IMR-90 (cell line): ENCODE measurements at regions of chr10 and their contacts with region 1.

Region 1: DNA sequence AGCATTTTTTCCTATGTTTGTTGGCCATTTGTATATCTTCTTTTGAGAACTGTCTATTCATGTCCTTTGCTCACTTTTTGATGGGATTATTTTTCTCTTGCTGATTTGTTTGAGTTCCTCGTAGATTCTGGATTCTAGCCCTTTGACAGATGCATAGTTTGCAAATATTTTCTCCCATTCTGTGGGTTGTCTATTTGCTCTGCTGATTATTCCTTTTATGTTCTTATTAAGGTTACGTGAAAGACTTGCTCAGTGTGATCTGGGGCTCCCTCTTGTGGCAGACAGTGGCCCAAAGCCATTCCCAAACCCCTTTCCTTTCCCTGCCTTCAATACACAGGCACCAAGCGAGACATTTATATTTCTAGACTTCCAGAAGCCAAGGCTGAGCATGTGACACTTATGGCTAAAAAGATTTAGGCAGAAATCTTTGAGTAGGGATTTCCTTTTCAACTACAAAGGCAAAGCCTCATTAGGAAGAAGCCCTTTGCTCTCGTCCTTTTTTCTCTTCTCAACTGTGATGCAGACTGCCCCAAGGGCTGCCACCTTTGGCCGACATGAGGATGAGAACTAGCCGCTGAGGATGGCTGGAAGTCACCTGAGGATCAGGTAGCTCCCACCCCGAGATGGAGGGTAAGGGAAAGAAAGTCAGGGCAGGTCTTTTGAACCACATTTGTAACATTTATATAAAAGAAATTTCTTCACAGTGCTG is 23.6 kb downstream of the ST8SIA6 start:
- DNase-seq: peak; percentile 73
- ATAC-seq: peak; percentile 97
- H3K4me3 ChIP-seq: no peak overlapping the region
- H3K27ac ChIP-seq: no peak overlapping the region
- H3K4me1 ChIP-seq: peaks cover 2% of the 10 kb centered on the region; the same call in 1 of the 2 replicates
- H3K27me3 ChIP-seq: peaks cover 26% of the 10 kb centered on the region
- CTCF ChIP-seq: peak; percentile 83
- POLR2A ChIP-seq: no peak
- RAD21 ChIP-seq: peak; percentile 80

Region 2: DNA sequence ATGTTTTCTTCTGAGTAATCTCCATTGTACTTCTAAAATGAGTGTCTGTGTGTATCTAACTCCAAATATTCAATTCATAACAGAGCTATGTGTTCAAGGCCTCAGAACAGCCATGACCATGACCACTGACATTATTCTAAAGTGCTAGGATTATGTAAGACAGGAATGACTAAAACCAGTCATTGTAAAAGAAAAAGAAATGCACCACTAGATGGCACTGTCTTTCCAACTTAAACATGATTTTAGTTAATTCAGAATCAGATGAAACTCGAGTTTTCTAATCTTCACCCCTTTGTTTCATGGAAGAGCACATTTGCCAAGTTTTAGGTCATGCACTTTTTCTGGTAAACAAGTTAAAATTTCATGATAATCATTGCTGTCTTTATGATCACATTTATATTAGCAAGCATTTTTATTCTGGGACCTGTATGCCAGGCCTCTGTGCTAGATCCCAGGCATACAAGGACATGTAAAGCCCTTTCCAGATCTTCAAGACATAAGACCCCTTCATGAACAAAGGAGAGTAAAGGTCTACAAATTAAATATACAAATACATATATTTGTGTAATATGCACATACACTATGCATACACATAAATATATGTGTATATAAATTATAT is 587.4 kb before region 1 on chr10:
- CTCF ChIA-PET with region 1: interaction called, 3 read pairs
- POLR2A ChIA-PET with region 1: no interaction called
- dilution Hi-C with region 1: no loop called
- in situ Hi-C with region 1: no loop called
- intact Hi-C with region 1: loop called (anchors 5 kb)
- DNase-seq: peak; percentile 82
- ATAC-seq: peak; percentile 85
- H3K4me3 ChIP-seq: no peak overlapping the region
- H3K27ac ChIP-seq: no peak overlapping the region
- H3K4me1 ChIP-seq: peaks cover 6% of the 10 kb centered on the region; the same call in 1 of the 2 replicates
- H3K27me3 ChIP-seq: no peaks in the 10 kb centered on the region
- CTCF ChIP-seq: peak; percentile 71
- POLR2A ChIP-seq: no peak
- RAD21 ChIP-seq: peak; percentile 77

Region 3: DNA sequence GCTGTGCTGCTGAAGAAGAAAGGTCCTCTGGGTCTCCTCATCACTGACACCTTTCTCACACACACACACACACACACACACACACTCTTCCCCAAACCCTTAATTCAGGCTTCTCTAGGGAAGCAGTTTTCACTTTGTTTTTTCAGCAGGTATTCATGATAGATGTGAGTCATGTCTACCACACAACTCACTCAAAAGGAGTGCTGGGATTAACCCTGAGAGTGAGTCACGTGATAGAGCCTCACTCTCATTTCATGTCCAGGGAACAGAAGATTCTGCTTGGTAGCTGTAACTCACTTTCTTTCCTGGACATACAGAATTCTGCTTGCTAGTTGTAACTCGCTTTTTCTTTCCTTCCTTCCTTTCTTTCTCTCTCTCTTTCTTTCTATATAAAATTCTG is 157.4 kb before region 1 on chr10:
- CTCF ChIA-PET with region 1: no interaction called
- POLR2A ChIA-PET with region 1: no interaction called
- dilution Hi-C with region 1: no loop called
- in situ Hi-C with region 1: no loop called
- intact Hi-C with region 1: loop called (anchors 10 kb)
- DNase-seq: peak; percentile 80
- ATAC-seq: peak; percentile 40; the same call in 1 of the 2 replicates
- H3K4me3 ChIP-seq: no peak overlapping the region
- H3K27ac ChIP-seq: no peak overlapping the region
- H3K4me1 ChIP-seq: no peaks in the 10 kb centered on the region
- H3K27me3 ChIP-seq: peaks cover 13% of the 10 kb centered on the region
- CTCF ChIP-seq: no peak
- POLR2A ChIP-seq: no peak
- RAD21 ChIP-seq: no peak

Region 4: DNA sequence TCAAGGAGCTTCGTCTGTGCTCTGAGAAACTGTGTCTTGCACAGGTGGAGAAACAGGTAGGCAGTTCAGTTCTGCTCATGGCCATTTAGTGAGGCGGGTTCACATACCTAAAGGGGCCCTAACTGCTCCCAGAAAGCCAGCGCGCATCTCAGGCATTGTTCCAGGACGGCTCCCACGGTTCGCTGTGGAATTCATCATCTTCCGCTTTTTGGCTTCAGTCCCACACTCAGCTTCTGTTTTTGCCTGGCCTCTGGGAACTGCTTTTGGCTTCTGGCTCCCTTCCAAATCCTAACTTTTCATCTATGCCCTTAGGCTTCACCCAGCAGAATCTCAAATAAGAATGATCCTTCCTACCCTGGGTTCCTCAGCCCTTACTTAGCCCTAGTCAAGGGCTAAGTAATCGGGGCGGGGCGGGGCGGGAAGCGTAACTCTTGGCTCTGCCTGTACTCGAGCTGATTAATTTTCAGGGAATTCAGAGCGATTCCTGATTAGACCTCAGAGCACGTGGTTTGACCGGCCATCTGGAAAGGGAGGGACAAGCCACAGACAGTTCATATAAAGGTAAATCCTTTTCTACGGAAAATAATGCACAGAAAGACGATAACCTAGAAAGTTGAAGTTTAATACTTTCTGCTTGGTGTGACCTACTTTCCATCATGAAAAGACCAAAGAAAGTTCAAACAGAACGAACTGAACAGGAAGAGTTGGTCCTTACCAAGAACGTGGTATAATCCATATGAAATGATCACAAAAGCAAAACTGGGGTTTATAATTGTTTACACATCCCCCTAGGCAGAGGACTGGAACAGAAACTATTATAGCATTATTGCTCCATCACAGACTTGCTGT is 82.1 kb before region 1 on chr10:
- CTCF ChIA-PET with region 1: no interaction called
- POLR2A ChIA-PET with region 1: no interaction called
- dilution Hi-C with region 1: no loop called
- in situ Hi-C with region 1: no loop called
- intact Hi-C with region 1: no loop called
- DNase-seq: peak; percentile 79
- ATAC-seq: peak; percentile 98
- H3K4me3 ChIP-seq: peak overlapping the region; percentile 7; the same call in 1 of the 2 replicates
- H3K27ac ChIP-seq: no peak overlapping the region
- H3K4me1 ChIP-seq: peaks cover 4% of the 10 kb centered on the region; the same call in 1 of the 2 replicates
- H3K27me3 ChIP-seq: peaks cover 2% of the 10 kb centered on the region
- CTCF ChIP-seq: no peak
- POLR2A ChIP-seq: no peak
- RAD21 ChIP-seq: no peak